ENCODE measurements at regions of chr15 and their contacts with region 1.

Region 1: GRCh38 chr15:22838292-22839042 is at the start of gene NIPA2:
- DNase-seq: peak; percentile 99
- H3K4me3 ChIP-seq: peak within 1 kb of the TSS; percentile 59 to 86 (median 70)
- H3K27ac ChIP-seq: peak within 1 kb of the TSS; percentile 86 to 97 (median 94)
- H3K4me1 ChIP-seq: peaks cover 0 to 27% (median 20%) of the 10 kb centered on the region in 4 donors
- H3K27me3 ChIP-seq: no peaks in the 10 kb centered on the region
- CTCF ChIP-seq: peak in 1 of 4 experiments; percentile 25
- EP300 ChIP-seq: peak in 2 of 4 donors; percentile 32 to 83
- POLR2A ChIP-seq: peak; percentile 82 to 83
- total RNA-seq, gene NIPA2: 21.6 to 40.3 (median 29.9) TPM

Region 2: DNA sequence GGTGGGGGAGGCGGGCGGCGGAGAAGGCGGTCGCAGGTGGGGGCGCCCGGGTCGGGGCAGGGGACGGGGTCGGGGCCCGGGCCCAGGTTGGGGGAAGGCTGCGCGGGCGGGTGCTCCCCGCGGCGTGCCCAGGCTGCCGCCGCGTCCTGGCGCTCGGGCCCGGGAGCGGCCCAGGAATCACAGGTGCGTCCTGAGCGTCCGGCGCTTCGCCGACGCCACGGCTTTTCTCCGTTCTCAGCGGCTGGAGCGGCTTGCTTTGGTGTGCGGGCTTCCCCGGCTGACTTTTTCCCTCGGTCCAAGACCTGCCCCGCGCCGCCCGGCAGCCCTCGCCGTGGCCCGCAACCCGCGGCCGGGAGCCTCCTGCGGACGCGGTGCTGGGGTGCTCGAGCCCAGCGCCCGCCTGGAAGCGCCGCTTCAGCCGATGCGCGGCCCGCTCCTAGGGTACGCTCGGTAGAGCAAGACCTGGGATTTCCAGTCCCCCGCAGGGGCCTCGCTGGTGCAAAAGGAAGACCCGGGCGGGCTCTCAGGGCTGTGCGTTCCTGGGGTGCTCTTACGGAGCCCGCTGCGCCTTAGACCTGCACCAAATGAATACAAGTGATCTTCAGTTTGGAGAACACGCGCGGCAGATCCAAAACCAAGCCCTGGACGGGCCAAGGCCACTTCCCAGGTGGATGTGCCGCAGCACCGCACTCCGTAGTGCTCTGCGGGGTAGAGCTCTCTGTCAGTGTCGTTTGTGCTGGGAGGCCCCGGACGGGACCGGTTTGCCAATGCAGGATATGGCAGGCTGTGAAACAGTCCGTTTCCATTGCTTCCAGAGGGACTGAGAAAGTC is 51.4 kb before region 1 on chr15:
- intact Hi-C with region 1: loop called (anchors 1 kb)
- DNase-seq: no peak
- H3K4me3 ChIP-seq: peak overlapping the region; percentile 56 to 82 (median 75)
- H3K27ac ChIP-seq: peak overlapping the region; percentile 86 to 94 (median 88)
- H3K4me1 ChIP-seq: peaks cover 0 to 15% (median 8%) of the 10 kb centered on the region in 4 donors
- H3K27me3 ChIP-seq: no peaks in the 10 kb centered on the region
- CTCF ChIP-seq: no peak
- EP300 ChIP-seq: no peak
- POLR2A ChIP-seq: no peak

Region 3: DNA sequence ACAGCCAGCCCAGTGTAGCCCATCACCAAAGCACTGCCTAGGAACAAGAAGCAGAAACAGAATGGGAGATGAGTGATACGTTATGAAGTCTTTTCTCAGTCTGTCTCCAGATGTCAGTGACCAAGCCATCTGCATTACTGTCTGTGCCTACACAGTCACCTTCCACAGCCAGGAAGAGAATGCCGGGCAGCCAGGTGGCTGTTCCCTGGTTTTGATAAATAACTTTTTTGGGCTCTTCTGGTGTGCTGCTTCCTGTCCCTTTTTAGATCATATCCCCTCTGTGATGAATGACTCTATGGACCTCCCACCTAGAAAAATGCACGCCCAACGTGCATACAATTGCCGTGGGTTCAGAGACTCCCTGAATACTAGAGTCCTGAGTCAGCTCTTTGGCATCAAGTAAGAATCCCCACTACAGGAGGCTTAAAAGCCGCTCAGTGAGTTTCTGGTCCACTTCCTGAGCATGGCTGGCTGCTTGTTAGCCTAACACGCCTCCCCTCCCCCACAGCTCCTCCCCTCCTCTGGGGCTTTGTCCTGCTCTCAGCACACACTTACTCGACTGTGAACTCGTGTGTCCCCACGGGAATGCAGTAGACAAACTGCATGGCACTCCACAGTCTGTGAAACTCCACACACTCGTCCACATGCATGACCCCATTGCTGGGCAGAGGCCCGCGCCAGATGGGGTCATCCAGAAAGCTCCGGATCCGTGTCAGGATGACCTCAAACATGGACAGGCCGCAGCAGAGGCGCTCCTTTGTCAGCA is 34.7 kb after region 1 on chr15:
- intact Hi-C with region 1: no loop called
- DNase-seq: no peak
- H3K4me3 ChIP-seq: no peak overlapping the region
- H3K27ac ChIP-seq: no peak overlapping the region
- H3K4me1 ChIP-seq: peaks cover 0 to 11% (median 3%) of the 10 kb centered on the region in 4 donors
- H3K27me3 ChIP-seq: no peaks in the 10 kb centered on the region
- CTCF ChIP-seq: no peak
- EP300 ChIP-seq: no peak
- POLR2A ChIP-seq: no peak

Region 4: GRCh38 chr15:22949074-22949547 is 110.6 kb after region 1 on chr15:
- intact Hi-C with region 1: loop called (anchors 5 kb)
- DNase-seq: peak; percentile 81
- H3K4me3 ChIP-seq: peak overlapping the region in 2 of 4 donors; percentile 5 to 20
- H3K27ac ChIP-seq: peak overlapping the region; percentile 35 to 77 (median 70)
- H3K4me1 ChIP-seq: peaks cover 0 to 78% (median 72%) of the 10 kb centered on the region in 4 donors
- H3K27me3 ChIP-seq: no peaks in the 10 kb centered on the region
- CTCF ChIP-seq: no peak
- EP300 ChIP-seq: no peak
- POLR2A ChIP-seq: no peak

Region 5: DNA sequence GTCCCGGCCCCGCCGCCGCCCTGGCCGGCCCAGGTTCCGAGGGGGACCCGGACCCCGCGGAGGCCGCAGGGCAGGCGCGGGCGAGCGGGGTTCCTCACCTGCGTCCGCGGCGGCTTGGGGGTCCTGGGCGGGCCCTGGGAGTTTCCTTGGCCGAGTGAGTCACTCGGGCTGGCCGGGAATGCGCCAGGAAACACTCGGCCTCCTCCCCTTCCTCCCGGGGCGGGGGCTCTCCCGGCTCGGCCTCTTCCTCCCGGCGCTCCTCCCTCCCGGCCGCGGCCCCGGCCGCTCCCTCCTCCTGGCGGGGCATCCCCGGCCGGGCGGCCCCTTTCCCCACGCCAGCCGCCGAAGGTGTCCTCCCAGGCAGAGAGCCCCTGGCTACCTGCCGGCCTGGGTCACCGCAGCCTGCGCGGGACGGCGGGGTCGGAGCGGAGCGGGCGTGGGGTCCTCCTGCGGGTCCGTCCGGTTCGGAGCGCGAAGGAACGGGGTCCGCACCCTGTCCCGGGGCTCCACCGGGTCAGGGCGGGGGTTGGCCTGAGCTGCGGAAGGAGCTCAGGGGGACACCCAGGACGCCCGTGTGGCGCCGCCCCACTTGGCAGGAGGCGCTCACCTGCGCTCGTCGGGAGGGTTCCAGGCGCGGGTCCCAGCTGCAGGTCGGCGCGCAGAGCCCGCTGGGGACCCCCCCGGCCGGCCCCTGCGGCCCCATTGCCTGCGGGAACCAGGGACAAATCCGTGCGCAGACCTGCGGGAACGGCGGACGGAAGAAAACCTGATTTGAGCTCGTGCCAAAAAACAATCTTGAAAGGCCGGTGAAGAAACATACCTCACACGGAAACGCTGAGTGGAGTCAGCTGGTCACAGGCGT is 142.0 kb after region 1 on chr15 and contains the start of gene CYFIP1:
- intact Hi-C with region 1: loop called (anchors 5 kb)
- DNase-seq: peak; percentile 93
- H3K4me3 ChIP-seq: peak within 1 kb of the TSS; percentile 82 to 95 (median 90)
- H3K27ac ChIP-seq: peak within 1 kb of the TSS; percentile 81 to 87 (median 82)
- H3K4me1 ChIP-seq: peaks cover 0 to 21% (median 12%) of the 10 kb centered on the region in 4 donors
- H3K27me3 ChIP-seq: no peaks in the 10 kb centered on the region
- CTCF ChIP-seq: no peak
- EP300 ChIP-seq: no peak
- POLR2A ChIP-seq: peak; percentile 10 to 20
- total RNA-seq, gene CYFIP1: 69.8 to 99.6 (median 77.2) TPM

Region 6: GRCh38 chr15:23003736-23004135 is 165.3 kb after region 1 on chr15:
- intact Hi-C with region 1: no loop called
- DNase-seq: peak; percentile 10
- H3K4me3 ChIP-seq: no peak overlapping the region
- H3K27ac ChIP-seq: no peak overlapping the region
- H3K4me1 ChIP-seq: no peaks in the 10 kb centered on the region
- H3K27me3 ChIP-seq: no peaks in the 10 kb centered on the region
- CTCF ChIP-seq: no peak
- EP300 ChIP-seq: no peak
- POLR2A ChIP-seq: no peak

Measured in sigmoid colon (tissue), 7 donors.